ENCODE measurements at regions of chr11 and their contacts with region 1.

Region 1: DNA sequence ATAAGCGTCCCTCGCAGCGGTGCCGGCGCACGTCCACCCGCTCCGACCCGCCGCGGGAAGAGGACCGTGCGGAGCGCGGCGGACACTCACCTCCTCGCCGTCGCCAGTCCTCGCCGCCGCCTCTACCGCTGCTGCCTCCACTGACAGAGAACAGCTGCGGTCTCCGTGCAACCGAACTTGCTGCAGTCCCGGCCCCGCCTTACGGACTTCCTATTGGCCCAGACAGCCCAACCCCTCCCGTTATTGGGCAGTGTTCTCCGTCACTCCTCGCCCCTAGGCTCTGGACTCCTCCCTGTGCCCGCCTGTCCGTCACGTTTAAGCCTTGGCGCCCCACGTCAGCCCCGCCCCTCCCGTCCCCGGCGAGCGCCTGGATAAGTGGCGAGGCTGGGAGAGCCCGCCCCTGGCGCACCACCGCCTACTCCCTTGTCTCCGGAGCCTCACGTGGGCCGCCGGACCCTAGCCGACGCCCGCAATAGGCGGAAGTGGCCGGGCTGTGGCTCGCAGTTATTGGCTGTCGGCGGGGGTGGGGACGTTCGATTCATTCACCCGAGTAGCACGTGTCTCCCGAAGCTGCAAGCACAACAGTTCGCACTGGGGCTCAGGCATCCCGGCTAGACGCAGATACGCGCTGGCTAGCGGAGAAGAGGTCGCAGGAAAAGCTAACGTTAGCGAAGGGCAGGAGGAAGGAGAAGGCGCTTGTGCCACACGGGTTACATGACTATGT is at the start of gene PC:
- DNase-seq: peak; percentile 99
- ATAC-seq: peak; percentile 98
- H3K4me3 Mint-ChIP-seq: peak within 1 kb of the TSS; percentile 78
- H3K27ac Mint-ChIP-seq: peak within 1 kb of the TSS; percentile 90
- H3K4me1 Mint-ChIP-seq: peaks cover 18% of the 10 kb centered on the region
- H3K27me3 Mint-ChIP-seq: no peaks in the 10 kb centered on the region
- total RNA-seq, gene PC: 9.2 to 9.3 TPM

Region 2: GRCh38 chr11:66466225-66467027 is 492.0 kb before region 1 on chr11 and contains the start of gene PELI3:
- CTCF ChIA-PET with region 1: no interaction called
- POLR2A ChIA-PET with region 1: no interaction called
- intact Hi-C with region 1: loop called in 1 of 2 experiments (anchors 5 kb)
- DNase-seq: peak; percentile 98
- ATAC-seq: peak; percentile 88
- H3K4me3 Mint-ChIP-seq: peak within 1 kb of the TSS; percentile 85
- H3K27ac Mint-ChIP-seq: peak within 1 kb of the TSS; percentile 79
- H3K4me1 Mint-ChIP-seq: peaks cover 38% of the 10 kb centered on the region
- H3K27me3 Mint-ChIP-seq: no peaks in the 10 kb centered on the region
- total RNA-seq, gene PELI3: 5.7 to 7.0 TPM

Region 3: GRCh38 chr11:66592457-66593302 is 365.7 kb before region 1 on chr11 and contains the starts of genes CCDC87 and CCS:
- CTCF ChIA-PET with region 1: no interaction called
- POLR2A ChIA-PET with region 1: no interaction called
- intact Hi-C with region 1: loop called in 1 of 2 experiments (anchors 1 kb)
- DNase-seq: peak; percentile 99
- ATAC-seq: peak; percentile 100
- H3K4me3 Mint-ChIP-seq: peak within 1 kb of the TSS; percentile 93
- H3K27ac Mint-ChIP-seq: peak within 1 kb of the TSS; percentile 98
- H3K4me1 Mint-ChIP-seq: peaks cover 19% of the 10 kb centered on the region
- H3K27me3 Mint-ChIP-seq: no peaks in the 10 kb centered on the region
- total RNA-seq, gene CCDC87: 0.09 to 0.14 TPM
- total RNA-seq, gene CCS: 16.3 to 24.0 TPM

Region 4: GRCh38 chr11:66734215-66734614 is 224.2 kb before region 1 on chr11:
- CTCF ChIA-PET with region 1: no interaction called
- POLR2A ChIA-PET with region 1: no interaction called
- intact Hi-C with region 1: no loop called
- DNase-seq: no peak
- ATAC-seq: no peak
- H3K4me3 Mint-ChIP-seq: no peak overlapping the region
- H3K27ac Mint-ChIP-seq: no peak overlapping the region
- H3K4me1 Mint-ChIP-seq: no peaks in the 10 kb centered on the region
- H3K27me3 Mint-ChIP-seq: peaks cover 20% of the 10 kb centered on the region

Region 5: GRCh38 chr11:66855574-66856495 is 102.6 kb before region 1 on chr11:
- CTCF ChIA-PET with region 1: interaction called, 4 read pairs
- POLR2A ChIA-PET with region 1: no interaction called
- intact Hi-C with region 1: loop called in 1 of 2 experiments (anchors 1 kb)
- DNase-seq: peak; percentile 94
- ATAC-seq: peak; percentile 83
- H3K4me3 Mint-ChIP-seq: peak overlapping the region; percentile 82
- H3K27ac Mint-ChIP-seq: peak overlapping the region; percentile 73
- H3K4me1 Mint-ChIP-seq: peaks cover 11% of the 10 kb centered on the region
- H3K27me3 Mint-ChIP-seq: no peaks in the 10 kb centered on the region

Region 6: DNA sequence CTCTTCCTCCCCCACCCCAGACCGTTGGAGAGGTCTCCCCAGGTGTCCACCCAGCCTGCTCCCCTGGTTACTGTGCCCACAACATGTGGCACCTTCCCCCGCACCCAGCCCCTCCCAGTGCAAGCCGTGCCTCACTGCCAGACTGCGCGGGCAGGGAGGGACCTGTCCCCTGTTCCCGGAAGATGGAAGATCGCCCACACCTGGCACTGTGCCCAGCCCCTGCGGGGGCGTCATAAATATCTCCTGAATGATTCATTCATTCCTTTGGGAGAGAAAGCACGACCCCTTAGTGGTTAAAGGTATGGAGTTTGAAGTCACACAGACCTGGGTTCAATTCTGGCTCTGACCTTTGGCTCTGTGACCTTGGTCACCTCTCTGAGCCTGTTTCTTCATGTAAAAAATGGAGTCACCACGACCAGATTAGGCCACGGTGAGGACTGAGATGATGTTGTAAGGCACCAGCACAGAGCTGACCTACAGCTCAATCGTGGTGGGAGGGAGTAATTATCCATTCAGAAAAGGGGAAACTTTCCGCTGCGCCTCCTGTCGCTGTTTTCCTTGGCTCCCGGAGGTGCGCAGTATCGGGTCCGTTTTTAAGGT is 64.0 kb after region 1 on chr11:
- CTCF ChIA-PET with region 1: interaction called, 7 read pairs
- POLR2A ChIA-PET with region 1: no interaction called
- intact Hi-C with region 1: loop called in 1 of 2 experiments (anchors 5 kb)
- DNase-seq: peak; percentile 16
- ATAC-seq: no peak
- H3K4me3 Mint-ChIP-seq: no peak overlapping the region
- H3K27ac Mint-ChIP-seq: no peak overlapping the region
- H3K4me1 Mint-ChIP-seq: peaks cover 33% of the 10 kb centered on the region
- H3K27me3 Mint-ChIP-seq: peaks cover 34% of the 10 kb centered on the region

Region 7: GRCh38 chr11:67317205-67317887 is 359.0 kb after region 1 on chr11:
- CTCF ChIA-PET with region 1: no interaction called
- POLR2A ChIA-PET with region 1: no interaction called
- intact Hi-C with region 1: loop called in 1 of 2 experiments (anchors 1 kb)
- DNase-seq: peak; percentile 99
- ATAC-seq: peak; percentile 83
- H3K4me3 Mint-ChIP-seq: peak overlapping the region; percentile 84
- H3K27ac Mint-ChIP-seq: peak overlapping the region; percentile 95
- H3K4me1 Mint-ChIP-seq: peaks cover 28% of the 10 kb centered on the region
- H3K27me3 Mint-ChIP-seq: peaks cover 3% of the 10 kb centered on the region